BJ (cell line): ENCODE measurements at regions of chr1 and their contacts with region 1.

Region 1: DNA sequence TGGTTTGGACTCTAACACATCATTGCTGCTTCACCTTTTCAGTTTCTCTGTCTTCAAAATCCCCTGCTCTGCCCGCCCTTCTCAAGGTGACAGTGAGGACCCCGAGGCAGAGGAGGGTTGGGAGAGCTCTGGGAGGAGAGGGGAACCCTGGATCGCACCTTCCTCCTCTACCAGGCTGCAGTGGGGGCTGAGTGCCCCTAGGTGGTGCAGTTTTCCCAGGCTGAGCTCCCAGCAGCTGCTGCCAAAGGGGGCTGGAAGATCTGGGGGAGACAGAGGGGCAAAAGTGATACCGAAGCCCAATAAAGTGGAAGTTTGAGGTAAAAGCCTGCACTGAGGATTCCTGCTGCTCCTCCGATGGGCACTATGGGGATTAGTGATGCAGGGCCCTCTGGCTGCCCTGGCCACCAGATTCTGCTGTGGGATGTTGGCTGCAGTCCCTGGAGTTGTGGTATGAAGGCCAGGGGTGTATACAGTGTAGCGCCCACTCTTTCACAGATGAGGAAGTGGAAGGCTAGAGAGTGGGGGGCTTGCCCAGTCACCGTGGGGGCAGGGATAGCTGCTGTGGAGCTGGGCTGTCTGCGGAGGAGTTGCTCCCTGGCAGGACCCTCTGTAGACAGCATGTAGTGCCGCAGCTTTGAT is 40.7 kb upstream of the SCMH1 start:
- DNase-seq: no peak
- H3K4me3 ChIP-seq: no peak overlapping the region
- H3K27me3 ChIP-seq: peaks cover 30% of the 10 kb centered on the region
- CTCF ChIP-seq: peak; percentile 95

Region 2: GRCh38 chr1:40965529-40965928 is 317.3 kb before region 1 on chr1:
- CTCF ChIA-PET with region 1: no interaction called
- POLR2A ChIA-PET with region 1: no interaction called
- DNase-seq: no peak
- H3K4me3 ChIP-seq: no peak overlapping the region
- H3K27me3 ChIP-seq: no peaks in the 10 kb centered on the region
- CTCF ChIP-seq: no peak

Region 3: DNA sequence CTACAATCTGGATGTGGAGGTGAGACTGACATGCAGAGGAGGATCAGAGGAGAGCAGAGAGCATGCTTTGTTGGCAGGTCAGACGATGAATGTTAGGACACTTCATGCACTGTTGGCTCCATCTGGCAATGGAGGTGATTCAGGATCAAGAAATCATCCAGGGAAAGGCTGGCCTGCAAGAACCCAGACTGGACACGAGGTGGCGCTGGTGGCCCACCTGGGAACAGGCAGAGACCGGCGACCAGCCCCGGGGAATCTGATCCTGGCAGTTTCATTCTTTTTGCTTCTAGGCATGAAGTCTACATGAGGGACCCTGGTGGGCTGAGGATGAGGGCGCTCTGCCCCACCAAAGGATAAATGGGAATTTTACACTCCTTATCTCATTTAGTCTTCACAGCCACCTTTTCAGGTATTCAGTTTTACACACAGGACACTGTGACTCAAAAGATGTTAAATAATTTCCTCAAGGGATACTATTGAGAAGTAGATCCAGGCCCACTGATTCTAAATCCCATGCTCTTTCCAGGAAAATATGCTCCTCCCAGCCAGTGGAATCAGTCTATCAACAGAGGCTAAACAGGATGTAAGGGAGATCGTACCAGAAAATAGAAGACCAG is 14.5 kb before region 1 on chr1:
- CTCF ChIA-PET with region 1: interaction called, 24 read pairs
- POLR2A ChIA-PET with region 1: no interaction called
- DNase-seq: peak; percentile 9
- H3K4me3 ChIP-seq: no peak overlapping the region
- H3K27me3 ChIP-seq: peaks cover 4% of the 10 kb centered on the region
- CTCF ChIP-seq: peak; percentile 98

Region 4: GRCh38 chr1:41313661-41314131 is 30.9 kb after region 1 on chr1:
- CTCF ChIA-PET with region 1: interaction called, 12 read pairs
- POLR2A ChIA-PET with region 1: no interaction called
- DNase-seq: no peak
- H3K4me3 ChIP-seq: no peak overlapping the region
- H3K27me3 ChIP-seq: peaks cover 7% of the 10 kb centered on the region
- CTCF ChIP-seq: peak; percentile 48

Region 5: DNA sequence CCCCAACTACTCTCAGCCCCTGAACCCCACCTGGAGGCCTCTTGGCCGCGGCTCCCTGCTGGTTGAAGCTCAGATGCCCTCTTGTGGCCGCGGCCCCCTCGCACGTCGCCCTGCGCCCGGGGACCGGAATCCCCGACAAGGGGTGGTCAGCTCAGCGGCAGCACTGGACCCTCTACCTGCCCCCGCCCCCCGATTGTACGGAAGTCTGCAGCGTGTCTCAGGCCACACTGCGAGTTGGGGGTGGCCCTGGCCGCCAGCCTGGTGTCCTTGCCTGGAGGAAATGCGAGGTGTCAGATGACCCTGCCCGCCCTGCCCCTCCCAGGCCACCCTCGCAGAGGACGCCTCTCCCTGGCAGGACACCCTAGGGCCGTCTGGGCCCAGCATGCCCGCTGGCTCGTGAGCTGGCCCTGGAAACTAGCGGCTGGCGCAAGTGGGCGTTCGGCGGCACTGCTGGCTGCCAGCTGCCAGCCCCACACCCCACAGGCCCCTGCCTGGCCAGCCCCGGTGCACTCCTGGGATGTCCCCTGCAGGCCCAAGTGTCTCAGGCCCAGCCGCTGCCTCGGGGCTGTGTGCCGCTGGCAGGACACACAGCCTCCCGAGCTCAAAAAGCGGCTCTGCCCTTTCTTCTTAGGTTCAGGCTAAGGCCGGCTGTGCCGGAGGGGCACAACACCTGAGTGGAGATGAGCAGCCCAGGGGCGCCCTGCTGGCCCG is 140.9 kb after region 1 on chr1:
- CTCF ChIA-PET with region 1: interaction called, 84 read pairs
- POLR2A ChIA-PET with region 1: no interaction called
- DNase-seq: no peak
- H3K4me3 ChIP-seq: no peak overlapping the region
- H3K27me3 ChIP-seq: no peaks in the 10 kb centered on the region
- CTCF ChIP-seq: peak; percentile 26; the same call in 1 of the 2 replicates